Calu3 (cell line): ENCODE measurements at regions of chr9 and their contacts with region 1.

Region 1: GRCh38 chr9:15416880-15417279 is 5.8 kb upstream of the SNAPC3 start:
- DNase-seq: peak; percentile 59
- H3K4me3 Mint-ChIP-seq: no peak overlapping the region
- H3K27ac Mint-ChIP-seq: no peak overlapping the region
- H3K4me1 Mint-ChIP-seq: peaks cover 9% of the 10 kb centered on the region
- H3K27me3 Mint-ChIP-seq: no peaks in the 10 kb centered on the region
- CTCF ChIP-seq: peak; percentile 18

Region 2: GRCh38 chr9:15142878-15143534 is 273.9 kb before region 1 on chr9:
- CTCF ChIA-PET with region 1: no interaction called
- intact Hi-C with region 1: no loop called
- DNase-seq: no peak
- H3K4me3 Mint-ChIP-seq: no peak overlapping the region
- H3K27ac Mint-ChIP-seq: no peak overlapping the region
- H3K4me1 Mint-ChIP-seq: no peaks in the 10 kb centered on the region
- H3K27me3 Mint-ChIP-seq: peaks cover 14% of the 10 kb centered on the region
- CTCF ChIP-seq: no peak

Region 3: DNA sequence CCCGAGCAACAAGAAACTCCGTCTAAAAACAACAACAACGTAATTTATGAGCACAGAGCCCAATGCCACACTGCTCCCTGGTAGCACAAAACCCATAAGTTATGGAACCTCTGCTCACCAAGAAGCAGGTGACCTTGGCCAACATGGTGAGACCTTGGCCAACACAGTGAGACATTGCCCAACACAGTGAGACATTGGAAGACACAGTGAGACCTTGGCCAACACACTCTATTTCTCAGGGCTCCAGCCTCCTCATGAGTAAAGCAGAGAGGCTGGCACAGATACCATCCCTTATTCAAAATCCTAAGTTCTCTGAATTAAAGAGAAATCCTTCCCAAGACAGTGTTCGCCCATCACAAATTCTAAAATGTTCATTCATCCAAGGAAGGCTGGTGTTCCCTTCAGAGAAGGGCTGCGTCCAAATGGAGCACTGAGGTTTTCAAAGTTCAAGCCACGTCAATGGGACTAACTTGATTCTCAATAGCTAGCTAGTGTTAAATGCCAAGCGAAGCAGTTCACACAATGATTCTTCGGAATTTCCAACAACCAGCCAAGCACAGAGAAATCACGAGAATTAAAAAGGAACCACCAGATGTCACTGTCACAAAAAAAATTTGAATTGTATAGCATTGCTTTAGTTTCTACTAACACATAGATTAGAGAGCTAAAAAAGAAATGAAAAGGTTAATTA is 139.3 kb before region 1 on chr9:
- CTCF ChIA-PET with region 1: interaction called, 4 read pairs
- intact Hi-C with region 1: loop called (anchors 2 kb)
- DNase-seq: no peak
- H3K4me3 Mint-ChIP-seq: no peak overlapping the region
- H3K27ac Mint-ChIP-seq: no peak overlapping the region
- H3K4me1 Mint-ChIP-seq: no peaks in the 10 kb centered on the region
- H3K27me3 Mint-ChIP-seq: no peaks in the 10 kb centered on the region
- CTCF ChIP-seq: no peak

Region 4: GRCh38 chr9:15306757-15307534 is 109.9 kb before region 1 on chr9 and contains the start of gene TTC39B:
- CTCF ChIA-PET with region 1: interaction called, 6 read pairs
- intact Hi-C with region 1: loop called (anchors 5 kb)
- DNase-seq: peak; percentile 94
- H3K4me3 Mint-ChIP-seq: peak within 1 kb of the TSS; percentile 90
- H3K27ac Mint-ChIP-seq: peak within 1 kb of the TSS; percentile 71
- H3K4me1 Mint-ChIP-seq: no peaks in the 10 kb centered on the region
- H3K27me3 Mint-ChIP-seq: no peaks in the 10 kb centered on the region
- CTCF ChIP-seq: no peak
- total RNA-seq, gene TTC39B: 6.0 and 7.5 TPM in 2 replicates

Region 5: GRCh38 chr9:15461056-15461455 is 44.2 kb after region 1 on chr9:
- CTCF ChIA-PET with region 1: no interaction called
- intact Hi-C with region 1: no loop called
- DNase-seq: no peak
- H3K4me3 Mint-ChIP-seq: no peak overlapping the region
- H3K27ac Mint-ChIP-seq: no peak overlapping the region
- H3K4me1 Mint-ChIP-seq: no peaks in the 10 kb centered on the region
- H3K27me3 Mint-ChIP-seq: no peaks in the 10 kb centered on the region
- CTCF ChIP-seq: no peak

Region 6: GRCh38 chr9:15578714-15579113 is 161.8 kb after region 1 on chr9:
- CTCF ChIA-PET with region 1: no interaction called
- intact Hi-C with region 1: no loop called
- DNase-seq: no peak
- H3K4me3 Mint-ChIP-seq: no peak overlapping the region
- H3K27ac Mint-ChIP-seq: no peak overlapping the region
- H3K4me1 Mint-ChIP-seq: no peaks in the 10 kb centered on the region
- H3K27me3 Mint-ChIP-seq: no peaks in the 10 kb centered on the region
- CTCF ChIP-seq: no peak